ENCODE measurements at regions of chr9 and their contacts with region 1.

Region 1: DNA sequence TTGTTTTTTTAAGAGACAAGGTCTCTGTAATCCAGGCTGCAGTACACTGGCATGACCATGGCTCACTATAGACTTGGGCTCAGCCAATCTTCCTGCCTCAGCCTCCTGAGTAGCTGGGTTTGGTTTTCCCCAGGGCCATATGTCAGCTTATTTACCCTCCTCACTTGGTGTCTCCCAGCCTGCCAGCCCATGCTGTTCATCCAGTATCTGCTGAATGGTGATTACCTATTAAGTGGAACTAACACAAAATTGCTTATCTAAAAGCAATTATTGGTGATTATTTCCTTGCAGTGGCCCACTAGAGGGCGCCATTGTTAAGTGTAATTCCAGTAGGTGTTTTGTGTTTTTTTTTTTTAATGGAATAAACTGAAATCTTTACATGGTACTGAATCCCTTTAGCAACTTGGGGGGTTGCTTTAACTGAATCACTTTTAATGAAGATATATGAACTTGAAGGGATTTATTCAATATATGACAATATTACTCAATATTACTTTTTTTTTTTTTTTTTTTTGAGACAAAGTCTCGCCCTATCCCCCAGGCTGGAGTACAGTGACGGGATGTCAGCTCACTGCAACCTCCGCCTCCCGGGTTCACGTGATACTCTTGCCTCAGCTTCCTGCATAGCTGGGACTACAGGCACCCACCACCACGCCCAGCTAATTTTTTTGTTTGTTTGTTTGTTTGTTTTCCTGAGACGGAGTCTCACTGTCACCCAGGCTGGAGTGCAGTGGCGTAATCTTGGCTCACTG is 13.8 kb downstream of the EXOSC2 start:
- DNase-seq: peak; percentile 54 to 61
- ATAC-seq: peak in 3 of 4 donors; percentile 18 to 38 (median 31)
- H3K4me3 ChIP-seq: no peak overlapping the region
- H3K27ac ChIP-seq: no peak overlapping the region
- H3K4me1 ChIP-seq: peaks cover 3% of the 10 kb centered on the region
- H3K27me3 ChIP-seq: no peaks in the 10 kb centered on the region
- CTCF ChIP-seq: peak; percentile 84

Region 2: DNA sequence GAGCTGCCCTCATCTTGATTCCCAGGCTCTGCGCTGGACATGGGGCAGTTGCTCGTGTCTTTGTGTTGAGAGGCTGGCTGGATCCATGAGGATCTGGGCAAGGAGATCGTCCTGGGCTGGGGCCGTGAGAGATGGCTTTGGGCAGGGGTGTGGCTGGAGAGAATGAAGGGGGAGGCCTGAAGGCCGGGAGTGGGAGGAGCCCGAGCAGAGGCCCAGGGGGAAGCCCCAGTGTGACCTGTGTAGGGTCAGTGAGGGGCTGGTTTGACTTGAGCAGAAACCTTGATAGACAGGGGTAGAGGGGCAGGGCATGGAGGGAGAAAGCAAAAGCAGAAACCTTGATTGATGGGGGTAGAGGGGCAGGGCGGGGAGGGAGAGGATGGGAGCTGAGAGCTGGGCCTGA is 317.0 kb before region 1 on chr9:
- intact Hi-C with region 1: no loop called
- DNase-seq: no peak
- ATAC-seq: no peak
- H3K4me3 ChIP-seq: no peak overlapping the region
- H3K27ac ChIP-seq: no peak overlapping the region
- H3K4me1 ChIP-seq: no peaks in the 10 kb centered on the region
- H3K27me3 ChIP-seq: no peaks in the 10 kb centered on the region
- CTCF ChIP-seq: no peak

Region 3: GRCh38 chr9:130590305-130590704 is 117.1 kb before region 1 on chr9:
- intact Hi-C with region 1: no loop called
- DNase-seq: no peak
- ATAC-seq: peak in 2 of 4 donors; percentile 31 to 53
- H3K4me3 ChIP-seq: no peak overlapping the region
- H3K27ac ChIP-seq: no peak overlapping the region
- H3K4me1 ChIP-seq: peaks cover 13% of the 10 kb centered on the region
- H3K27me3 ChIP-seq: no peaks in the 10 kb centered on the region
- CTCF ChIP-seq: no peak

Region 4: DNA sequence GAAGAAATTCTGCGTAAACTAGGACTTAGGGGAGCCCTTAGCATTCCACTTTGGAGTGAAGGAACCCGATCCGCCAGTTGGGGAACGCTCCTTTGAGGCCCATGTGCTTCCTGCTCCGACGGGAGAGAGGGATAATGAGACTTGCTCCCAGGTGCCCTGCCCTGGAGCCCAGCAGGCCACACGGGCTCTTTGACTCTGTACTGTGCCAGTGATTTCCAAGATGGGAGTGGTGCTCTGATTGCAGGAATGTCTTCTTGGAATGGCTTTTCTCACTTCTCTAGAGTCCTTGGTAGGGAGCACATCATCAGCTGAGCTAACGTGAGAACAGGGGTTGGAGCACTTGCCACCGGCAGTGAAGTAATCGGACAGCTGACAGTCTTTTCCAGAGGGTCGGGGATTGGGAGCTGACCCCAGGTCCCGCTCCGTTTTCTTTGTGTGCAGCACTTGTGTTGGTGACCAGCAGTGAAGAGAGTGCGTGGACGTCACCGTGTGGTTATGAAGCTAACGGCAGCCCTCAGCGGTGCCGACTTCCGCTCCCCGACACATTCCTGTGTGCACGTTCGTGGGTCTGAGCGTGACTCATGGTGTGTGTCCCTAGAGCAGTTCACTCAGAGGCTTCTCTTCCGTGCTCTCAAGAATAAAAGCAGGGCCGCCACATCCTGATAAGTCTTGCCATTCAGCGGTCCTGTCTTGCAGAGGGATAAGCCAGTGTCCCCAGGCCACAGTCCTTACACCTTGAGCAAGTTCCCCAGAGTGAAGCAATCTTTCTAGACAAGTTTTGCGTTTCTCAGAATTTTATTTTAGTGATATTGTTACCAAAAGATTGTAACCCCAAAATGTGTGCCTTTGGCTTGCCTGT is 153.3 kb after region 1 on chr9:
- intact Hi-C with region 1: loop called in 1 of 2 experiments (anchors 5 kb)
- DNase-seq: peak; percentile 85 to 89
- ATAC-seq: peak; percentile 91 to 97 (median 94)
- H3K4me3 ChIP-seq: no peak overlapping the region
- H3K27ac ChIP-seq: peak overlapping the region; percentile 66
- H3K4me1 ChIP-seq: peaks cover 18% of the 10 kb centered on the region
- H3K27me3 ChIP-seq: no peaks in the 10 kb centered on the region
- CTCF ChIP-seq: peak; percentile 26

Measured in psoas muscle (tissue), 8 donors.